SK-N-SH (cell line): ENCODE measurements at regions of chr7 and their contacts with region 1.

Region 1: GRCh38 chr7:104341546-104341945 is 13.1 kb downstream of the LHFPL3 start:
- DNase-seq: peak; percentile 69
- H3K4me3 ChIP-seq: no peak overlapping the region; a peak in 1 of 4 replicates
- H3K27ac ChIP-seq: no peak overlapping the region
- H3K4me1 ChIP-seq: no peaks in the 10 kb centered on the region
- H3K27me3 ChIP-seq: no peaks in the 10 kb centered on the region
- CTCF ChIP-seq: peak; percentile 36
- EP300 ChIP-seq: no peak
- RAD21 ChIP-seq: peak; percentile 83

Region 2: DNA sequence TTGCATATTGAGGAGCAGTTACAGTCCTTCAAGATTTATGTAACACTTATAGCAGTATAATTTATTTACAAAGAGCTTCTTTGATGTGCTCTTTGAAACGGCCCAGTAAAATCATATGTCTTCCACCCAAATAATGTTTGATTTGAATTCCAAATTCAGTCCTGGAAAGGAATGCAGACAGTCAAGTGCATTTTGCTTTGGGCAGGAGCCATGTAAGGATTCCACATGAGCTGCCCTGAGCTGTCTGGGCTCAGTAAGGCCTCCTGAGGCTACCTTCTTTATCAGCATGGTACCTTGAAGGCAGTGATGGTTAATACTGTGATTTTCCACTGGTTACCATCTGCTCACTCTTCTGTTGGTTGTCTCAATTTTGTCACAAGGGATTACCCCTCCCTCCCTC is 54.7 kb before region 1 on chr7:
- CTCF ChIA-PET with region 1: no interaction called
- POLR2A ChIA-PET with region 1: no interaction called
- DNase-seq: no peak
- H3K4me3 ChIP-seq: no peak overlapping the region
- H3K27ac ChIP-seq: no peak overlapping the region
- H3K4me1 ChIP-seq: no peaks in the 10 kb centered on the region
- H3K27me3 ChIP-seq: no peaks in the 10 kb centered on the region
- CTCF ChIP-seq: no peak
- EP300 ChIP-seq: no peak
- RAD21 ChIP-seq: no peak

Region 3: GRCh38 chr7:104328296-104328969 is 13.1 kb before region 1 on chr7 and contains the start of gene LHFPL3:
- CTCF ChIA-PET with region 1: interaction called, 17 read pairs
- POLR2A ChIA-PET with region 1: interaction called, 3 read pairs
- DNase-seq: peak; percentile 79
- H3K4me3 ChIP-seq: peak within 1 kb of the TSS; percentile 30 to 57
- H3K27ac ChIP-seq: no peak within 1 kb of the TSS
- H3K4me1 ChIP-seq: peaks cover 0 to 5% of the 10 kb centered on the region in 2 experiments; a peak in 1 of 4 replicates
- H3K27me3 ChIP-seq: peaks cover 43% of the 10 kb centered on the region
- CTCF ChIP-seq: no peak
- EP300 ChIP-seq: peak in 1 of 2 experiments; percentile 7; a peak in 1 of 4 replicates
- RAD21 ChIP-seq: no peak
- polyA plus RNA-seq, gene LHFPL3: not detected in 2 replicates

Region 4: DNA sequence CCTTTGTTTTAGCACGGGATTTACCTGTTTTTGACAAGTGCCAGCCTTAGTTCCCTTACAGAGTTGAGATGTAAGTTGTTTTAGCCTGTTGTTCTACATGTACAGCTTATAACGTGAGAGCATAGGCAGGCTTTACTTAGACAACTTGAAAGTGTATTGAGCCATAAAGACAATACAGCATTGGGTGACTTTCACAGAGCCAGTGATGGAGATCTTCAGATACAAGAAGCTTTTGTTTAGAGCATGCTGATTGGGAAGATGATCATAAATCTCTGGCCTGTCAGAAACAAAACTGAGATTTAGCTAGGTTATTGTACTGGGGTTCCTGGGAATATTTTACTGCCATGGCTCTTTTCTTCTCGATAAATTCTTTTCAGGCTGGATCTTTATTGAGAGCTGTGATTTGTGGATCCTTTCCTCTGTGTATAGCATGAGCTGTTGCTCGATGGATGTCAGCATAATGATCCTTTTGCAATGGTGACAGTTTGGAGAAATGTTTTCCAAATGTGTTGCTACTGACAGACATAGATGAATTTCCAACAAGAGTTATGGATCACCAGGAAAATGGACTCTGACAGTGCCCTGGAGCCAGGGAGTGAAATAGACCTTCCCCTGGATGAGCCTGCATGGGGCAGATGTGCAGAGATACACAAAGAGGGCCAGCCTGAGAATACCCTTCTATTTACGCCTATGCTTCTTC is 17.1 kb after region 1 on chr7:
- CTCF ChIA-PET with region 1: interaction called, 14 read pairs
- POLR2A ChIA-PET with region 1: no interaction called
- DNase-seq: no peak
- H3K4me3 ChIP-seq: no peak overlapping the region
- H3K27ac ChIP-seq: no peak overlapping the region
- H3K4me1 ChIP-seq: no peaks in the 10 kb centered on the region
- H3K27me3 ChIP-seq: no peaks in the 10 kb centered on the region
- CTCF ChIP-seq: no peak
- EP300 ChIP-seq: no peak
- RAD21 ChIP-seq: no peak

Region 5: GRCh38 chr7:104862719-104863118 is 521.2 kb after region 1 on chr7:
- CTCF ChIA-PET with region 1: interaction called, 44 read pairs
- POLR2A ChIA-PET with region 1: no interaction called
- DNase-seq: peak; percentile 63
- H3K4me3 ChIP-seq: no peak overlapping the region
- H3K27ac ChIP-seq: no peak overlapping the region
- H3K4me1 ChIP-seq: peaks cover 0 to 4% of the 10 kb centered on the region in 2 experiments; a peak in 1 of 4 replicates
- H3K27me3 ChIP-seq: peaks cover 54% of the 10 kb centered on the region
- CTCF ChIP-seq: peak; percentile 58
- EP300 ChIP-seq: no peak
- RAD21 ChIP-seq: peak; percentile 66